ENCODE measurements at regions of chr1 and their contacts with region 1.

Region 1: GRCh38 chr1:220089650-220090556 is at the start of gene BPNT1:
- DNase-seq: peak; percentile 99
- ATAC-seq: peak; percentile 78
- H3K4me3 Mint-ChIP-seq: peak within 1 kb of the TSS; percentile 85
- H3K27ac Mint-ChIP-seq: peak within 1 kb of the TSS; percentile 84
- H3K4me1 Mint-ChIP-seq: peaks cover 12% of the 10 kb centered on the region
- H3K27me3 Mint-ChIP-seq: no peaks in the 10 kb centered on the region
- CTCF ChIP-seq: no peak
- total RNA-seq, gene BPNT1: 19.6 to 25.3 TPM

Region 2: GRCh38 chr1:220046052-220046930 is 43.6 kb before region 1 on chr1 and contains the start of gene EPRS1:
- CTCF ChIA-PET with region 1: interaction called, 3 read pairs
- POLR2A ChIA-PET with region 1: interaction called, 3 read pairs
- intact Hi-C with region 1: loop called (anchors 5 kb)
- DNase-seq: peak; percentile 94
- ATAC-seq: peak; percentile 98
- H3K4me3 Mint-ChIP-seq: peak within 1 kb of the TSS; percentile 99
- H3K27ac Mint-ChIP-seq: peak within 1 kb of the TSS; percentile 97
- H3K4me1 Mint-ChIP-seq: peaks cover 33% of the 10 kb centered on the region
- H3K27me3 Mint-ChIP-seq: no peaks in the 10 kb centered on the region
- CTCF ChIP-seq: peak; percentile 74
- total RNA-seq, gene EPRS1: 200 to 210 TPM

Measured in activated CD8-positive, alpha-beta T cell treated with anti-CD3 and anti-CD28 coated beads for 36 hours (primary cell).